ENCODE measurements at regions of chr15 and their contacts with region 1.

Region 1: GRCh38 chr15:85794603-85795336 is at the start of gene KLHL25:
- DNase-seq: peak; percentile 98
- H3K4me3 Mint-ChIP-seq: peak within 1 kb of the TSS; percentile 89
- H3K27ac Mint-ChIP-seq: peak within 1 kb of the TSS; percentile 89
- H3K4me1 Mint-ChIP-seq: peaks cover 30% of the 10 kb centered on the region
- H3K27me3 Mint-ChIP-seq: no peaks in the 10 kb centered on the region
- total RNA-seq, gene KLHL25: 9.0 and 9.8 TPM in 2 replicates

Region 2: GRCh38 chr15:85545185-85545584 is 249.6 kb before region 1 on chr15:
- intact Hi-C with region 1: no loop called
- DNase-seq: no peak
- H3K4me3 Mint-ChIP-seq: no peak overlapping the region
- H3K27ac Mint-ChIP-seq: no peak overlapping the region
- H3K4me1 Mint-ChIP-seq: peaks cover 65% of the 10 kb centered on the region
- H3K27me3 Mint-ChIP-seq: no peaks in the 10 kb centered on the region

Region 3: GRCh38 chr15:85730001-85730820 is 64.6 kb before region 1 on chr15:
- intact Hi-C with region 1: loop called (anchors 5 kb)
- DNase-seq: peak; percentile 87
- H3K4me3 Mint-ChIP-seq: no peak overlapping the region
- H3K27ac Mint-ChIP-seq: peak overlapping the region; percentile 13
- H3K4me1 Mint-ChIP-seq: peaks cover 15% of the 10 kb centered on the region
- H3K27me3 Mint-ChIP-seq: no peaks in the 10 kb centered on the region

Region 4: GRCh38 chr15:85840065-85840801 is 45.5 kb after region 1 on chr15:
- intact Hi-C with region 1: loop called (anchors 5 kb)
- DNase-seq: peak; percentile 95
- H3K4me3 Mint-ChIP-seq: peak overlapping the region; percentile 76
- H3K27ac Mint-ChIP-seq: no peak overlapping the region
- H3K4me1 Mint-ChIP-seq: peaks cover 10% of the 10 kb centered on the region
- H3K27me3 Mint-ChIP-seq: peaks cover 14% of the 10 kb centered on the region